ENCODE measurements at regions of chr6 and their contacts with region 1.

Region 1: GRCh38 chr6:7725849-7726415 is at the start of gene BMP6:
- DNase-seq: peak; percentile 85 to 87
- H3K4me3 ChIP-seq: peak within 1 kb of the TSS; percentile 45 to 51
- H3K27ac ChIP-seq: no peak within 1 kb of the TSS
- H3K4me1 ChIP-seq: peaks cover 0 to 10% of the 10 kb centered on the region in 2 donors
- H3K27me3 ChIP-seq: peaks cover 0 to 17% of the 10 kb centered on the region in 2 donors
- CTCF ChIP-seq: no peak
- POLR2A ChIP-seq: peak; percentile 26 to 44
- total RNA-seq, gene BMP6: 2.2 to 8.5 (median 4.4) TPM

Region 2: DNA sequence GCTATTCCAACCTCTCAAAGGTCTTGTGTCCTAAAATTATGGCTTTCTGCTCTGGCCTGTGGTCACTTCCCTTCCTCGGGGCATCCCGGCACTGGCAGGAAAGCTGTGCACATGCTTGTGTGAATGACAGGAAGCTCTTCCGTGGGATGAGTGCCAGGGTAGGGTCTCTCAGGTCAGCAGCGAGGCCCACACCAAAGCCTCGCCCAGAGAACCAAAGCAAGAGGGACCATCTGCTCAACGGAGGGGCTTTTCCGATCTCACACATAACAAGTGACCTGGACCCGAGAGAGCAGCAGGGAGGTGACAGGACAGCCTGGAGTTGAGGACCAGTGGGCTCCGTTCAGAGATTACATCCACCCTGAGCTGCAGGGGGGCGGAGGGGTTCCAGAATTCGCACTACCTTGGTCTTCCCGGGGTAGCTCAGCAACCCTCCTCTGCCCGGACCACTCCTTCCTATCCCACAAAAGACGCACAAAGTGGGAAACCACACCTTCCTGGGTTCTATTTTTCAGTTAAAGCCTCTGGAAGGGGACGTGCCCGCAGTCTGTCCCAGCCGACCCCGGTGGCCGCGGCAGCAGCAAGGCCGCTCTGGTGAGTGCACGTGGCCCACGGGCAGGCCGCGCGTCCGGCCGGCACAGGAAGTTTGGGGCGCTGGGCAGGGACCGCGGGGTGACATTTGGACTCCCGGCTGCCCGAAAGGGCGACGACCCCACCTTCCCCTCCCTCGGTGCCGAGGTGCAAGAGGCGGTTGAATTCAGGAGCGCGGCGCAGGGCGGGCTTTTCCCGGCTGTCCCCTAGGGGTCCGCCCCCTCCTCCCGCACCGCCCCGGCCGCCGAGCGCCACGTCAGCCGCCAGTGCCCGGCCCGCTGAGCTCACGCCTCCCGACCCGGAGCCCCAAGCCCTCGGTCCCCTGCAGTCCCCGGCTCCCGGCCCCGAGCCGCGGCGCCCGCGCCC is 183.7 kb after region 1 on chr6:
- intact Hi-C with region 1: loop called (anchors 5 kb)
- DNase-seq: peak in 1 of 2 donors; percentile 42
- H3K4me3 ChIP-seq: peak overlapping the region; percentile 56 to 92
- H3K27ac ChIP-seq: peak overlapping the region; percentile 56 to 84
- H3K4me1 ChIP-seq: peaks cover 0 to 8% of the 10 kb centered on the region in 2 donors
- H3K27me3 ChIP-seq: no peaks in the 10 kb centered on the region
- CTCF ChIP-seq: no peak
- POLR2A ChIP-seq: peak in 1 of 2 donors; percentile 24

Region 3: DNA sequence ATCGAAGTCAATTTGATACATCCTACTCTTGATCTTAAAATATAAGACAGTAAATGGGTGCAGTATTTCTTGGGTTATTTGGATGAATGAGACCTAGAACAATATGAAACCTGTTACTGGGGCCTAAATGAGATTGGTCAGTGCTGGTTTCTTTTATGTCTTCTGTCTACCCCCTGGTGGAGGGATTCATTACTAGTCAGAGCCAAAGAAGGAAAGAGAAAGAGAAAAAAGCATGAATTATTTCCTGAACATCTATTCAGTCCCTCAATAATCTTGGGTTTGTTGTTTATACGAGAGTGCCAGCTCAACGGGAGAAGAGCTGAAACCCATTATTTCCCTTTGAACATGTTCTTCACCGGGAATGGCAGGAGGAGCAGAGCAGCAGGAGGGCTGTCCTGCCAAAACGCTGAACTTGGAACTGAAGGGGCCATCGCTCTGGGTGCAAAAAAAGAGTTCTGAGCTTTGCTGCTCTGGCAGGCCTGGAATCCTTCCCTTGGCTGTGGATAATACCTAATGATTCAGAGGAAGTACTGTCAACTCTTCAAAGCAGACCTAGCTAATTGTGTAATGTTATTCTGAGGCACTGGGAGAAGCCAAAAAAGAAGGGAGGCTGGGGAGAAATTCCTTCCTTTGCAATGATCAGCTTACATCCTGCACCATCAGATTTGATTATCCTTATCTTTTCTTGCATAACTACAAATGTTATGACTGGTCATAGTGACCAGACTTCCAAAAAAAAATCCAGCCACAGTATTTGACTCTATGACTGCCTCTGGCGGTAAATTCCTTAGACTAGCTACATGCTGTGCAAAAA is 266.3 kb after region 1 on chr6:
- intact Hi-C with region 1: loop called (anchors 10 kb)
- DNase-seq: peak; percentile 50 to 64
- H3K4me3 ChIP-seq: no peak overlapping the region
- H3K27ac ChIP-seq: peak overlapping the region; percentile 39 to 60
- H3K4me1 ChIP-seq: no peaks in the 10 kb centered on the region
- H3K27me3 ChIP-seq: no peaks in the 10 kb centered on the region
- CTCF ChIP-seq: peak; percentile 33 to 55 (median 40)
- POLR2A ChIP-seq: no peak

Region 4: DNA sequence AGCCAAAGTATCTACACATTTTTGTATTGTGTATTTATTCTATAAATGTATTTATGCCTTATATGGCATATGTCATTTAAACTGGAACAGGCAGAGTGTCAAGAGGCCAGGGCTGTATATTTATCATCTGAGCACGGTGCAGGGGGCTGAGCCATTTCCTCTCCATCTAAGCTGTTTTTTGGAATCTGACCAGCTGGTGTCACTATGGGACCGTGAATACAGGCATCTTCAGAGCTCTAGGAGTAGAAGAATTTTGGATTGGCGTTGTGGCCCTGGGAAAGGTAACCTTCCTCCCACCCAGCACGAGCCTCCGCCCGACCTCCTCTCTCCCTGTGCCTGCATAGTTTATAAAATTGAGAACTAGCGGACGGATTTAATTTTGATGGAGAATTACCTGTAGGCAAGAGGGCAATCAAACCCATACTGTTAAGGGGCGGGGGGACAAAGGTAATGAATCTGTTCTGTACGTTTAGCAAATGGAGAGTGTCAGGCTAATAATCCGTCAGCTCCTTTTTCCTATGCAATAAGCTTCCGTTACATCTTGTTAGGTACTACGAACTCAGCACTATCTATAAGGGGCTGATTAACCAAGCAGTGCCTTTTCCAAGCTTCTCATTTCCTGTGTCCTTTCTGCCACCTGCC is 405.4 kb after region 1 on chr6:
- intact Hi-C with region 1: no loop called
- DNase-seq: peak in 1 of 2 donors; percentile 24
- H3K4me3 ChIP-seq: no peak overlapping the region
- H3K27ac ChIP-seq: no peak overlapping the region
- H3K4me1 ChIP-seq: no peaks in the 10 kb centered on the region
- H3K27me3 ChIP-seq: no peaks in the 10 kb centered on the region
- CTCF ChIP-seq: peak; percentile 27 to 50 (median 38)
- POLR2A ChIP-seq: no peak

Measured in uterus (tissue), 4 donors.